ENCODE measurements at regions of chr3 and their contacts with region 1.

Region 1: GRCh38 chr3:177359593-177360357 is 162.5 kb upstream of the TBL1XR1 start:
- DNase-seq: peak; percentile 96
- ATAC-seq: peak; percentile 79
- H3K4me3 ChIP-seq: peak overlapping the region; percentile 57 to 87 (median 70)
- H3K4me3 Mint-ChIP-seq: peak overlapping the region; percentile 91
- H3K27ac ChIP-seq: peak overlapping the region; percentile 90
- H3K27ac Mint-ChIP-seq: peak overlapping the region; percentile 98
- H3K4me1 ChIP-seq: peaks cover 41 to 53% of the 10 kb centered on the region in 2 donors
- H3K4me1 Mint-ChIP-seq: peaks cover 62% of the 10 kb centered on the region
- H3K27me3 ChIP-seq: no peaks in the 10 kb centered on the region
- H3K27me3 Mint-ChIP-seq: no peaks in the 10 kb centered on the region
- CTCF ChIP-seq: no peak

Region 2: GRCh38 chr3:177109688-177110330 is 250.0 kb before region 1 on chr3:
- CTCF ChIA-PET with region 1: no interaction called
- POLR2A ChIA-PET with region 1: no interaction called
- intact Hi-C with region 1: no loop called
- DNase-seq: peak; percentile 54
- ATAC-seq: peak; percentile 76
- H3K4me3 ChIP-seq: no peak overlapping the region
- H3K4me3 Mint-ChIP-seq: peak overlapping the region; percentile 62
- H3K27ac ChIP-seq: peak overlapping the region in 1 of 2 donors; percentile 60
- H3K27ac Mint-ChIP-seq: peak overlapping the region; percentile 57
- H3K4me1 ChIP-seq: peaks cover 38 to 65% of the 10 kb centered on the region in 2 donors
- H3K4me1 Mint-ChIP-seq: peaks cover 73% of the 10 kb centered on the region
- H3K27me3 ChIP-seq: no peaks in the 10 kb centered on the region
- H3K27me3 Mint-ChIP-seq: no peaks in the 10 kb centered on the region
- CTCF ChIP-seq: no peak

Region 3: GRCh38 chr3:177144923-177145780 is 214.6 kb before region 1 on chr3:
- CTCF ChIA-PET with region 1: interaction called, 3 read pairs
- POLR2A ChIA-PET with region 1: interaction called, 7 read pairs
- intact Hi-C with region 1: loop called (anchors 2 kb)
- DNase-seq: peak; percentile 71
- ATAC-seq: peak; percentile 70
- H3K4me3 ChIP-seq: peak overlapping the region in 3 of 5 experiments; percentile 16 to 29 (median 18)
- H3K4me3 Mint-ChIP-seq: peak overlapping the region; percentile 68
- H3K27ac ChIP-seq: peak overlapping the region; percentile 75 to 85
- H3K27ac Mint-ChIP-seq: peak overlapping the region; percentile 86
- H3K4me1 ChIP-seq: peaks cover 70 to 72% of the 10 kb centered on the region in 2 donors
- H3K4me1 Mint-ChIP-seq: peaks cover 83% of the 10 kb centered on the region
- H3K27me3 ChIP-seq: no peaks in the 10 kb centered on the region
- H3K27me3 Mint-ChIP-seq: no peaks in the 10 kb centered on the region
- CTCF ChIP-seq: no peak

Region 4: GRCh38 chr3:177251755-177252154 is 108.0 kb before region 1 on chr3:
- CTCF ChIA-PET with region 1: interaction called, 3 read pairs
- POLR2A ChIA-PET with region 1: interaction called, 5 read pairs
- intact Hi-C with region 1: loop called (anchors 1 kb)
- DNase-seq: peak; percentile 52
- ATAC-seq: peak; percentile 58
- H3K4me3 ChIP-seq: no peak overlapping the region
- H3K4me3 Mint-ChIP-seq: no peak overlapping the region
- H3K27ac ChIP-seq: no peak overlapping the region
- H3K27ac Mint-ChIP-seq: no peak overlapping the region
- H3K4me1 ChIP-seq: peaks cover 11 to 19% of the 10 kb centered on the region in 2 donors
- H3K4me1 Mint-ChIP-seq: peaks cover 28% of the 10 kb centered on the region
- H3K27me3 ChIP-seq: no peaks in the 10 kb centered on the region
- H3K27me3 Mint-ChIP-seq: no peaks in the 10 kb centered on the region
- CTCF ChIP-seq: no peak

Region 5: DNA sequence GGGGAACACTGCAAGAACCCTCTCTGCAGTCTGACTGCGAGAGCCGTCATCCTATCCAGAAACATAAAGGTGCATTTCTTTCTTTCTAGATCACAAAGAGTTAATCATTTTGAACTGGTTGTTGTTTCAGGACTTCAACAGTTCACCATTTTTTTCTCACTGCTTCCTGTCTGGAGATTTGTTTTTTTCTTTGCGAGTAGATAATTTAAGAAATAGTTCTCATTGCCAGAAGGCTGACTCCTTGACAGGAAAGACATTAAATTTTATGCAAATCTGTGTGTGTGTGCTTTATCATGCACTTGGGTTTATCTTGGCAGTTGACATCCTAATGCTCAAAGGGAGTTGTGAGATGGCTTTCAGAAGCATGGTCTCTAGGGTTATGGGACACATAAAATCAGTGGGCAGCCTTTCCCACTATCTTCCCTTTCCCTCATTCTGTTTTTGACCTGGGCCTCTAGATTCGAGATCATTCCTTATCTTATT is 39.0 kb before region 1 on chr3:
- CTCF ChIA-PET with region 1: interaction called, 5 read pairs
- POLR2A ChIA-PET with region 1: interaction called, 4 read pairs
- intact Hi-C with region 1: loop called (anchors 1 kb)
- DNase-seq: peak; percentile 48
- ATAC-seq: peak; percentile 32
- H3K4me3 ChIP-seq: peak overlapping the region in 1 of 5 experiments; percentile 31
- H3K4me3 Mint-ChIP-seq: peak overlapping the region; percentile 72
- H3K27ac ChIP-seq: peak overlapping the region; percentile 5 to 61
- H3K27ac Mint-ChIP-seq: peak overlapping the region; percentile 83
- H3K4me1 ChIP-seq: peaks cover 78 to 81% of the 10 kb centered on the region in 2 donors
- H3K4me1 Mint-ChIP-seq: peaks cover 69% of the 10 kb centered on the region
- H3K27me3 ChIP-seq: no peaks in the 10 kb centered on the region
- H3K27me3 Mint-ChIP-seq: no peaks in the 10 kb centered on the region
- CTCF ChIP-seq: no peak

Region 6: GRCh38 chr3:177378168-177378567 is 18.4 kb after region 1 on chr3:
- CTCF ChIA-PET with region 1: interaction called, 4 read pairs
- POLR2A ChIA-PET with region 1: interaction called, 3 read pairs
- intact Hi-C with region 1: loop called (anchors 2 kb)
- DNase-seq: peak; percentile 70
- ATAC-seq: peak; percentile 43
- H3K4me3 ChIP-seq: no peak overlapping the region
- H3K4me3 Mint-ChIP-seq: peak overlapping the region; percentile 59
- H3K27ac ChIP-seq: no peak overlapping the region
- H3K27ac Mint-ChIP-seq: peak overlapping the region; percentile 47
- H3K4me1 ChIP-seq: peaks cover 22% of the 10 kb centered on the region in 2 donors
- H3K4me1 Mint-ChIP-seq: peaks cover 40% of the 10 kb centered on the region
- H3K27me3 ChIP-seq: no peaks in the 10 kb centered on the region
- H3K27me3 Mint-ChIP-seq: no peaks in the 10 kb centered on the region
- CTCF ChIP-seq: no peak

Region 7: DNA sequence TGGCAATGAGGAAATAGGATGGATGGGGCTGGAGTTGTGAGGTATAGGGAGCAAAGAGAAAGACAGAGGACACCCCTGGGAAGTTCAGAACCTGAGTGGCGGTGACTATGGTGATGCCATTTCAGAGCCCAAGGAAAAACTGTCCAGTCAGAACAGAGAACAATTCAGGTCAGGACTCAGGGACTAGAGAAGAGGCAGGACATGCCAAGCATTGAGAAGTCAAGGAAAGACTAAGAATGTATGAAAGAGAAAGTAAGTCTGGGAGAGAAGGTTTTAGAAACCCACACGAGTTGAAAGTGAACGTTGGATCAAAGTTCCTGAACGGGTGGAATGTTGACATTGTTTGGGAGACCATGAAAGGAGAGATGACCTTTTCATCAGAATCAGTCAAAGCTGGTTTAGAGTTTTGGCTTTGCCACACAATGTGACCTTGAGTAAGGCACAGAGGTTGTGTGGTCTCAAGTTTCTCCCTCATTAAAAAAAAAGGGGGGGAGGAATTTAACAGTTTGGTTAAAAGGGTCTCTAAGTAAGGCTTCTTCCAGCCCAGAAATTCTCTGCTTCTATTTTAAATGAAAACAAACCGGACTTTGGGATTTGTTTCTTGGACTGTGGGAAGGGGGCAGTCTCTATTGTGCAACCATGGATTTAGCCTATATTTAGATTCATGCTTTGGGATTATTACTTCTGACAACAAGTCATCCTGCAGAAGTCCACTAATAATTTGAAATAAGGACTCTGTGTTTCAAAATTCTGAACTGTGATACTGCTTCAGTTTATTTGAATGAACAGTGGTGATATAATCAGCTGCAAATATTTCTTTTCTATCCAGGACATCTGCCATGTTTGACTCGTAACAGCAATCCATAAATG is 153.4 kb after region 1 on chr3:
- CTCF ChIA-PET with region 1: no interaction called
- POLR2A ChIA-PET with region 1: no interaction called
- intact Hi-C with region 1: no loop called
- DNase-seq: no peak
- ATAC-seq: no peak
- H3K4me3 ChIP-seq: no peak overlapping the region
- H3K4me3 Mint-ChIP-seq: no peak overlapping the region
- H3K27ac ChIP-seq: no peak overlapping the region
- H3K27ac Mint-ChIP-seq: no peak overlapping the region
- H3K4me1 ChIP-seq: no peaks in the 10 kb centered on the region
- H3K4me1 Mint-ChIP-seq: no peaks in the 10 kb centered on the region
- H3K27me3 ChIP-seq: no peaks in the 10 kb centered on the region
- H3K27me3 Mint-ChIP-seq: no peaks in the 10 kb centered on the region
- CTCF ChIP-seq: no peak

Region 8: DNA sequence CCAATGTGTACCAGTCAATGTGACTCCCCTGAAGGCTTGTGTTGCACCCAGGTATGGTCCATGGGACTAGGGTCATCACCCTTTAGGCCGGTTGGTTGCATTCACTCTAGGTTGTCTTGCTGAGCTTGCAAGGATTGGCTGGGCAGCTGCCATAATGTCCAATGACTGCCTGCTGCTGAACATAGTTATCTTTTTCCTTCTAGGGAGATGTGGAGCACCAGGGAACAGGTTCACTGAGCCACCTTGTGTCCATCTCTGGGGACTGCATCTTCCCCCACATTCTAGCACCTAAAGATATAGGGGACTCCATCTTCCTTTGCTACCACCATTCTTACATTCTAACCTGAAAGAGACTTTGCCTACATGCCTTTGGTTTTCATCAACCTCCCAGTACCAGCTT is 417.9 kb after region 1 on chr3:
- CTCF ChIA-PET with region 1: interaction called, 10 read pairs
- POLR2A ChIA-PET with region 1: no interaction called
- intact Hi-C with region 1: loop called (anchors 5 kb)
- DNase-seq: peak; percentile 58
- ATAC-seq: peak; percentile 47
- H3K4me3 ChIP-seq: no peak overlapping the region
- H3K4me3 Mint-ChIP-seq: no peak overlapping the region
- H3K27ac ChIP-seq: no peak overlapping the region
- H3K27ac Mint-ChIP-seq: no peak overlapping the region
- H3K4me1 ChIP-seq: peaks cover 14 to 19% of the 10 kb centered on the region in 2 donors
- H3K4me1 Mint-ChIP-seq: peaks cover 18% of the 10 kb centered on the region
- H3K27me3 ChIP-seq: no peaks in the 10 kb centered on the region
- H3K27me3 Mint-ChIP-seq: no peaks in the 10 kb centered on the region
- CTCF ChIP-seq: peak; percentile 56

Measured in B cell (primary cell).